Psoas muscle (tissue), 8 donors: ENCODE measurements at regions of chr11 and their contacts with region 1.

Region 1: GRCh38 chr11:124586238-124586860 is 16.6 kb downstream of the OR8A1 start:
- DNase-seq: peak; percentile 50 to 64
- ATAC-seq: no peak
- H3K4me3 ChIP-seq: no peak overlapping the region
- H3K27ac ChIP-seq: no peak overlapping the region
- H3K4me1 ChIP-seq: no peaks in the 10 kb centered on the region
- H3K27me3 ChIP-seq: no peaks in the 10 kb centered on the region
- CTCF ChIP-seq: peak; percentile 52

Region 2: DNA sequence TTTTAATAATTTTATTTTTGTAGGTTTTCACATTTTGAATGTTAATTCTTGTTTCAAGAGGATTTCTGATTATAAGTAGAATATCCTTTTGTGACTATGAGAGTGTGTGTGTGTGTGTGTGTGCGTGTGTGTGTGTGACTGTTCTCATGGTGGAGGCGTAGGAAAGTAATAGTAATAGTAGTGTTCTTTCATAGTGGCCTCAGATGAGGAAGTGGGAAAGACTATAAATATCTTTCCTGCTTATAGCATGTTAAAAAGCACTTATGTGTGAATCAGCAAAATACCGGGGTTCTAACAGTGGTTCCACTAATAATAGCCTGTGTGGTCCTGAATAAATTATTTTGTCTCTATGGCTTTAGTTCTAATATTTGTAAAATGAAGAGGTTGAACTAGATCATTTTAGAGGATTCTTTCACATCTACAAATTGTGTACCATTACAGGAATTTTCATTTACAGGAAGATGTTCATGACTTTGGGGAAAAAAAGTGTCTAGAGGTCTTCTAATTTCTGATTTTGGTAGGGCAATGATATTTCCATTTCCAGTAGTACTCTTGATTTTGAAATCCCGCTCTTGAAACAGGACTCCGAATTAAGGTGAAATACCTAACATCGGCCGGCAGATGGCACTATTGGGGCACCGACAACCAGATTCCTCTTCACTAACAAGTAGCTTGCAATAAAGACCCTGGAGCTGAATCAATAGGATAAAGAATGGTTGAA is 515.3 kb before region 1 on chr11:
- intact Hi-C with region 1: loop called (anchors 10 kb)
- DNase-seq: peak; percentile 50 to 73
- ATAC-seq: peak in 2 of 4 donors; percentile 40 to 61
- H3K4me3 ChIP-seq: no peak overlapping the region
- H3K27ac ChIP-seq: no peak overlapping the region
- H3K4me1 ChIP-seq: no peaks in the 10 kb centered on the region
- H3K27me3 ChIP-seq: peaks cover 0 to 32% (median 0%) of the 10 kb centered on the region in 3 donors
- CTCF ChIP-seq: peak; percentile 74

Region 3: DNA sequence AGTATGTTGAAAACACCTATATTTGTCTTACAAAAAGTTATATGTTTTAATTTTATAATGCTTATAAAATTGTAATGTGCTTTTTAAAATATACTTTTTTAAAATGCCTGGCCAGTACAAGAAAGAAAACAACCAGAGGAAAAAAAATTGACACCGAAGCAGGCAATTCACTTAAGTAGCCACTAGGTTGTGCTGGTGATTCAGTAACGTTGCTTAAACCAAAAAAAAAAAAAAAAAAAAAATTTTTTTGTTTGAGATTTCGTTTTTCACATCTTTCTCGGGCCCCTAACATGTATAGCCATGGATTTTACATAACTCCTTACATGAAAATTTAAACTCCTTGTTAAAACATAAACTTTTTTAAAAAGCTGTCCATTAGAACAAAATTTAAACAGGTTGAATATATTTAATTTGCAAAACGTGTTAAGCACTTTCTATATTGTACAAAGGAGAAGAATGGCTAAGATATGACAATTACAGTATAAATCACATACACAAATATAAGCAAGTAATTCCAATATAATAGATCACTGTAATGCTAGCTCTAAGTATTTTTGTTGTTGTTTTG is 170.9 kb before region 1 on chr11:
- intact Hi-C with region 1: loop called (anchors 1 to 5 kb)
- DNase-seq: no peak
- ATAC-seq: no peak
- H3K4me3 ChIP-seq: no peak overlapping the region
- H3K27ac ChIP-seq: no peak overlapping the region
- H3K4me1 ChIP-seq: no peaks in the 10 kb centered on the region
- H3K27me3 ChIP-seq: no peaks in the 10 kb centered on the region
- CTCF ChIP-seq: peak; percentile 61

Region 4: DNA sequence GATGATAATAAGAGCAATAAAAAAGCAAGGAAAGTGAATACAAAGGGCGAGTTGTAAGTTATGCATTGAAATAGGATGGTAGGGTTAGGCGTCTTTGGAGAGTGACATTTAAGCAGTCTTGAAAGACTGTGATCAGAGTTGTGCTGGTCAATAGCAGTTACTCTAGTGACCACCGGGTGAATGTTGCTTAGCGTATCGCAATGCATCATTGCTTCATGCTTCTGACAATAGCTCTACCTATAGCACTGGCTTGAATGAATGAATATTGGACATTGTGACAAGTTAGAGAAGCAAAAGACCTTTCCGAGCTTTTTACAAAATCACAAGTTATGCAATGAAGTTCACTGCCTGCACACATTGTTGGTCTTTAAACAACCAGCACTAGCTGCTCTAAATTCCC is 35.2 kb before region 1 on chr11:
- intact Hi-C with region 1: no loop called
- DNase-seq: no peak
- ATAC-seq: no peak
- H3K4me3 ChIP-seq: no peak overlapping the region
- H3K27ac ChIP-seq: no peak overlapping the region
- H3K4me1 ChIP-seq: no peaks in the 10 kb centered on the region
- H3K27me3 ChIP-seq: no peaks in the 10 kb centered on the region
- CTCF ChIP-seq: no peak

Region 5: GRCh38 chr11:125111343-125112207 is 525.2 kb after region 1 on chr11 and contains the start of gene TMEM218:
- intact Hi-C with region 1: no loop called
- DNase-seq: peak; percentile 100
- ATAC-seq: peak; percentile 100
- H3K4me3 ChIP-seq: peak within 1 kb of the TSS; percentile 91
- H3K27ac ChIP-seq: peak within 1 kb of the TSS; percentile 71
- H3K4me1 ChIP-seq: peaks cover 15% of the 10 kb centered on the region
- H3K27me3 ChIP-seq: no peaks in the 10 kb centered on the region
- CTCF ChIP-seq: no peak
- total RNA-seq, gene TMEM218: 4.9 to 12.1 (median 5.9) TPM